Mammary epithelial cell (primary cell): ENCODE measurements at regions of chr4 and their contacts with region 1.

Region 1: GRCh38 chr4:158578476-158578875 is 56.8 kb downstream of the RXFP1 start:
- DNase-seq: peak; percentile 43
- H3K4me3 ChIP-seq: no peak overlapping the region
- H3K27ac ChIP-seq: no peak overlapping the region
- H3K4me1 ChIP-seq: no peaks in the 10 kb centered on the region
- H3K27me3 ChIP-seq: no peaks in the 10 kb centered on the region
- CTCF ChIP-seq: peak; percentile 19 to 68

Region 2: GRCh38 chr4:158259955-158260575 is 318.4 kb before region 1 on chr4:
- CTCF ChIA-PET with region 1: no interaction called
- dilution Hi-C with region 1: no loop called
- in situ Hi-C with region 1: no loop called
- intact Hi-C with region 1: loop called (anchors 1 kb)
- DNase-seq: peak; percentile 11
- H3K4me3 ChIP-seq: no peak overlapping the region
- H3K27ac ChIP-seq: no peak overlapping the region
- H3K4me1 ChIP-seq: no peaks in the 10 kb centered on the region
- H3K27me3 ChIP-seq: no peaks in the 10 kb centered on the region
- CTCF ChIP-seq: peak; percentile 25 to 39

Region 3: GRCh38 chr4:158295053-158295452 is 283.4 kb before region 1 on chr4:
- CTCF ChIA-PET with region 1: no interaction called
- dilution Hi-C with region 1: no loop called
- in situ Hi-C with region 1: no loop called
- intact Hi-C with region 1: no loop called
- DNase-seq: no peak
- H3K4me3 ChIP-seq: no peak overlapping the region
- H3K27ac ChIP-seq: no peak overlapping the region
- H3K4me1 ChIP-seq: no peaks in the 10 kb centered on the region
- H3K27me3 ChIP-seq: no peaks in the 10 kb centered on the region
- CTCF ChIP-seq: no peak

Region 4: DNA sequence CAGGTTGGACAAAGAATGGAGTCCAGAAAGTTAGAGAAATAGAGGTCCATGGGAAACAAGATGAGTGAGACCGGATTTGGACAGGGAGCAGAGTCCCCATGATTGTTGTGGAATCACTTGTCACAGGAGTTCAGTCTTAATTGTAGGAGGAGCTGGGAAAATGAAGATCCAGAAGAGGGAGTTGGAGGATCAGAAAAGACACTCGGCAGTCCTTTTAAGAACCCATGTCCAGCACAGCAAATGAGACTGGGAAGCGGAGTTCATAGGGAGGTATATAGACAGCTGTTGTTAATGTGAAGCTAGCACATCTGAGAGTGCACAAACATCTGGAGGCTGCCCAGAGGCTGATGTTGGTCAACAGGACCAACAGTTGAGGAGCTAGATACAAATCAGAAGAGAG is 168.2 kb before region 1 on chr4:
- CTCF ChIA-PET with region 1: no interaction called
- dilution Hi-C with region 1: no loop called
- in situ Hi-C with region 1: no loop called
- intact Hi-C with region 1: loop called (anchors 1 kb)
- DNase-seq: peak; percentile 22
- H3K4me3 ChIP-seq: no peak overlapping the region
- H3K27ac ChIP-seq: no peak overlapping the region
- H3K4me1 ChIP-seq: no peaks in the 10 kb centered on the region
- H3K27me3 ChIP-seq: no peaks in the 10 kb centered on the region
- CTCF ChIP-seq: peak; percentile 12 to 35

Region 5: DNA sequence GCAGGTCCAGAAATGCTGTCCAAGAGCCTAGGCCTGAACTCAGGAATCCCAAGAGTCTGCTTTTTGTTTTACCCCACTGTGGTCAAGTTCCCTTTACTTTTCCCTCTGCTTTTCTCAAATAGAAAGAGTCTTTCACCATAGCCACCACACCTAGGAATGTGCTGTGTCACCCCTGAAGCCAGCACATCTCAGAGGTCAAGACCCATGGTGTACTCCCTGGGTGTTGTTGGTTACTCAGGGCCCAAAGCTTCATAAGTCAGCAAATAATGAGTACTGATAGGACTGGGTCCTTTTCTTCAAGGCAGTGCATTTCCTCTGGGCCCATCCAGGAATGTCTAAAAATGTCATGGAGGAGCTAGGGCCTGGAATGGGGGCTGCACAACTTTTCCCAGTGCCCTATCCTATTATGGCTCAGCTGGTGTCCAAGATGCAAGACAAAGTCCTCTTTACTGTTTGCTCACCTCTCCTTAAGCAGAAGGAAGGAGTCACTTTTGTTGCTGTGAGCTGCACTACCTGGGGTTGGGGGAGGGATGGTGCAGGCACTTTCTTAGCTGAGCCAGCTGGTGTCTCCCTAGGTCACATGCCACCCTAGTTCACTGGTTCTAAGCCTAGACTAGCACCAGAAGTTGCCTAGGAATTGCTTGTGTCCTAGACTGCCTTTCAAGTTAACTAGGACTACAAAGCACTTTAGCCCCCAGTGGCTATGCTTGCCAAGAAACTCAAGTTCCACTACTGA is 119.2 kb before region 1 on chr4:
- CTCF ChIA-PET with region 1: no interaction called
- dilution Hi-C with region 1: no loop called
- in situ Hi-C with region 1: no loop called
- intact Hi-C with region 1: loop called (anchors 2 kb)
- DNase-seq: peak; percentile 73
- H3K4me3 ChIP-seq: no peak overlapping the region
- H3K27ac ChIP-seq: peak overlapping the region; percentile 95
- H3K4me1 ChIP-seq: peaks cover 53% of the 10 kb centered on the region
- H3K27me3 ChIP-seq: no peaks in the 10 kb centered on the region
- CTCF ChIP-seq: no peak

Region 6: GRCh38 chr4:158496030-158496741 is 82.3 kb before region 1 on chr4:
- CTCF ChIA-PET with region 1: no interaction called
- dilution Hi-C with region 1: no loop called
- in situ Hi-C with region 1: no loop called
- intact Hi-C with region 1: loop called (anchors 5 kb)
- DNase-seq: no peak
- H3K4me3 ChIP-seq: no peak overlapping the region
- H3K27ac ChIP-seq: no peak overlapping the region
- H3K4me1 ChIP-seq: no peaks in the 10 kb centered on the region
- H3K27me3 ChIP-seq: no peaks in the 10 kb centered on the region
- CTCF ChIP-seq: peak; percentile 53 to 68